ENCODE measurements at regions of chr6 and their contacts with region 1.

Region 1: DNA sequence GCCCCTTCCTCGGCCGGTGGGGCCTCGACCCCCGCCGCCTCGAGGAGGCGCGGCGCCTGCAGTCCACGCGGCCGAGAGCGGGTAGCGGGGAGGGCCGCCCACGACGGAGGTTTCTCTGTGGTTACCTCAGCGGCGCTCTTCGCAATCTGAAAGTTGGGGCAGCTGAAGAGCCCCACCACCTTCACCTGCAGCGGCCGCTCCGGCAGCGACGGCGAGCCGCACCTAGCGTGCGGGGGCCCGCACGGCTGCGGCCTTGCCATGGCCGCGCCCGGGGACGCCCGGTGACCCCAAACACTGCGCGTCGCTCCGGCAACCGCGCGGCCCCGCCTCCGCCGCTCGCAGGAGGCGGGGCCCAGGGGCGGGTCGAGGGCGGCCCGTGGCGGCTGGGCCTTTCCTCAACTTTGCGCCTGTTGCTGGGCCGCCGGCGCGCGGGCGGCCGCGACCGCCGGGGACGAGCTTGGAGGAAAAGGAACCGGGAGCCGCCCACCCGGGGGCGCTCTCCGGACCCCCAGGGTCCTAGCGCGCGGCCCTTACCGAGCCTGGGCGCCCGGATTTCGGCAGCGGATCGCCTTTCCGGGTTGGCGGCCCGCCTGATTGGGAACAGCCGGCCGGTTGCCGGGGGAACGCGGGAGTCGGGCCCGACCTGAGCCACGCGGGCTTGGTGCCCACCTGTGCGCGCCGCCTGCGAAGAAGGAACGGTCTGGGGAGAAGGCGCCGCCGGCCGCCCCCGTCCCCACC is at the starts of genes PPIL6 and SMPD2:
- DNase-seq: peak; percentile 83 to 90
- H3K4me3 ChIP-seq: peak within 1 kb of the TSS; percentile 57
- H3K4me3 Mint-ChIP-seq: peak within 1 kb of the TSS; percentile 96
- H3K27ac Mint-ChIP-seq: peak within 1 kb of the TSS; percentile 97
- H3K4me1 ChIP-seq: peaks cover 7% of the 10 kb centered on the region
- H3K4me1 Mint-ChIP-seq: no peaks in the 10 kb centered on the region
- H3K27me3 ChIP-seq: no peaks in the 10 kb centered on the region
- H3K27me3 Mint-ChIP-seq: no peaks in the 10 kb centered on the region
- CTCF ChIP-seq: peak in 1 of 2 experiments; percentile 33
- total RNA-seq, gene PPIL6: 0.30 TPM in 1 of 2 replicates, not detected in the other
- total RNA-seq, gene SMPD2: 12.3 and 12.8 TPM in 2 replicates

Region 2: GRCh38 chr6:109187399-109188114 is 252.9 kb before region 1 on chr6:
- CTCF ChIA-PET with region 1: no interaction called
- POLR2A ChIA-PET with region 1: no interaction called
- intact Hi-C with region 1: loop called (anchors 10 kb)
- DNase-seq: peak in 1 of 2 experiments; percentile 63
- H3K4me3 ChIP-seq: no peak overlapping the region
- H3K4me3 Mint-ChIP-seq: no peak overlapping the region
- H3K27ac Mint-ChIP-seq: no peak overlapping the region
- H3K4me1 ChIP-seq: no peaks in the 10 kb centered on the region
- H3K4me1 Mint-ChIP-seq: peaks cover 2% of the 10 kb centered on the region
- H3K27me3 ChIP-seq: no peaks in the 10 kb centered on the region
- H3K27me3 Mint-ChIP-seq: peaks cover 3% of the 10 kb centered on the region
- CTCF ChIP-seq: peak; percentile 90 to 97

Region 3: GRCh38 chr6:109455502-109456282 is 15.2 kb after region 1 on chr6 and contains the start of gene MICAL1:
- CTCF ChIA-PET with region 1: interaction called, 3 read pairs
- POLR2A ChIA-PET with region 1: no interaction called
- intact Hi-C with region 1: loop called (anchors 2 kb)
- DNase-seq: peak; percentile 69 to 78
- H3K4me3 ChIP-seq: peak within 1 kb of the TSS; percentile 84
- H3K4me3 Mint-ChIP-seq: peak within 1 kb of the TSS; percentile 99
- H3K27ac Mint-ChIP-seq: peak within 1 kb of the TSS; percentile 76
- H3K4me1 ChIP-seq: peaks cover 13% of the 10 kb centered on the region
- H3K4me1 Mint-ChIP-seq: no peaks in the 10 kb centered on the region
- H3K27me3 ChIP-seq: no peaks in the 10 kb centered on the region
- H3K27me3 Mint-ChIP-seq: no peaks in the 10 kb centered on the region
- CTCF ChIP-seq: peak in 1 of 2 experiments; percentile 40
- total RNA-seq, gene MICAL1: 11.7 and 11.8 TPM in 2 replicates

Region 4: GRCh38 chr6:109482905-109483735 is 42.6 kb after region 1 on chr6 and contains the start of gene ZBTB24:
- CTCF ChIA-PET with region 1: no interaction called
- POLR2A ChIA-PET with region 1: interaction called, 16 read pairs
- intact Hi-C with region 1: loop called (anchors 5 kb)
- DNase-seq: peak; percentile 93 to 95
- H3K4me3 ChIP-seq: peak within 1 kb of the TSS; percentile 91
- H3K4me3 Mint-ChIP-seq: peak within 1 kb of the TSS; percentile 95
- H3K27ac Mint-ChIP-seq: peak within 1 kb of the TSS; percentile 72
- H3K4me1 ChIP-seq: peaks cover 13% of the 10 kb centered on the region
- H3K4me1 Mint-ChIP-seq: peaks cover 27% of the 10 kb centered on the region
- H3K27me3 ChIP-seq: no peaks in the 10 kb centered on the region
- H3K27me3 Mint-ChIP-seq: no peaks in the 10 kb centered on the region
- CTCF ChIP-seq: no peak
- total RNA-seq, gene ZBTB24: 9.2 and 10.3 TPM in 2 replicates

Region 5: GRCh38 chr6:109690737-109691621 is 250.5 kb after region 1 on chr6 and contains the starts of genes AK9 and FIG4:
- CTCF ChIA-PET with region 1: no interaction called
- POLR2A ChIA-PET with region 1: no interaction called
- intact Hi-C with region 1: loop called (anchors 2 kb)
- DNase-seq: peak; percentile 93 to 95
- H3K4me3 ChIP-seq: peak within 1 kb of the TSS; percentile 77
- H3K4me3 Mint-ChIP-seq: peak within 1 kb of the TSS; percentile 83
- H3K27ac Mint-ChIP-seq: peak within 1 kb of the TSS; percentile 84
- H3K4me1 ChIP-seq: 0 out of 2 replicates have a peak, but pooled peaks cover 7% of the 10 kb centered on the region
- H3K4me1 Mint-ChIP-seq: no peaks in the 10 kb centered on the region
- H3K27me3 ChIP-seq: no peaks in the 10 kb centered on the region
- H3K27me3 Mint-ChIP-seq: no peaks in the 10 kb centered on the region
- CTCF ChIP-seq: peak; percentile 15 to 38
- total RNA-seq, gene AK9: 3.4 and 4.4 TPM in 2 replicates
- total RNA-seq, gene FIG4: 7.3 and 7.9 TPM in 2 replicates